ENCODE measurements at regions of chr6 and their contacts with region 1.

Region 1: DNA sequence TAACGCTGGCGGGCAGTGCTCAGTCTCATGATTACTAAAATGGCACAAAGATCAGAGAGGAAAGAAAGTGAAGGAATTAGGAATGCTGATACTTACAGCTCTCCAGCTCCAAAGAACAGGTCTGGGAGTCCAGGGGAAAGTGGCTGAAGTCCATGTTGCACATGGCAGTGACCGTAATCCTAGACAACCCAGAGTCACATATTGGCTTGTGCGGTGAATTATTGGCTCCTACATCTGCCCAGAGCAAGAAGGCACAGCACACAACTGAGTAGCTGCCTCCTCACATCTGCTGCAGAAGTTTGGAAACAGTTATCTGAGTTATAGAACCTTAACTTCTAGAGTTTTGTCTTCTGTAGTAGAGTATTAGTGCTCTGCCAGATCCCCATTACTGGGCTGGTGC is 47.2 kb downstream of the GABRR2 start:
- DNase-seq: no peak
- ATAC-seq: no peak
- H3K4me3 ChIP-seq: no peak overlapping the region
- H3K27ac ChIP-seq: no peak overlapping the region
- H3K4me1 ChIP-seq: no peaks in the 10 kb centered on the region
- H3K27me3 ChIP-seq: peaks cover 5% of the 10 kb centered on the region
- CTCF ChIP-seq: no peak
- POLR2A ChIP-seq: no peak
- RAD21 ChIP-seq: no peak

Region 2: GRCh38 chr6:87378947-87379346 is 1889.0 kb before region 1 on chr6:
- CTCF ChIA-PET with region 1: no interaction called
- POLR2A ChIA-PET with region 1: interaction called, 10 read pairs
- dilution Hi-C with region 1: no loop called
- in situ Hi-C with region 1: no loop called
- intact Hi-C with region 1: no loop called
- DNase-seq: no peak
- ATAC-seq: no peak
- H3K4me3 ChIP-seq: no peak overlapping the region
- H3K27ac ChIP-seq: no peak overlapping the region
- H3K4me1 ChIP-seq: no peaks in the 10 kb centered on the region
- H3K27me3 ChIP-seq: no peaks in the 10 kb centered on the region
- CTCF ChIP-seq: no peak
- POLR2A ChIP-seq: no peak
- RAD21 ChIP-seq: no peak

Region 3: DNA sequence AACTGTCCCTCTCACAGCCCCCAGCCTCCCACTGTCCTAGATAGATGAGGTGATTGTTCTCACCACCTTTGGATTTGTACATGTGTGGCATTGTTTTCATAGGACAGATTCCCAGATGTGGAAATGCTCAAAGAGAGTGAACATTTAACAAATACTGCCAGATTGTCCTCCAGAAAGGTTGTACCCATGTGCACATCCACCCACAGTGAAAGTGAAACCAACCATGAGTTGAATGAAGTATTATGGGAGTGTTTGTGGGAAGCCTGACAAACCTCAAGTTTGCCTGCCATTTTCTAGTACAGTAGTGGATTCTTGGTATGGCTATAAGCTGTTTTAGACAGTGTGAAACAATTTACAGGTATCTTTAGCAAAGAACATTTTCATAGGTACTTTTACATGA is 207.7 kb after region 1 on chr6:
- CTCF ChIA-PET with region 1: no interaction called
- POLR2A ChIA-PET with region 1: no interaction called
- dilution Hi-C with region 1: no loop called
- in situ Hi-C with region 1: no loop called
- intact Hi-C with region 1: no loop called
- DNase-seq: no peak
- ATAC-seq: no peak
- H3K4me3 ChIP-seq: no peak overlapping the region
- H3K27ac ChIP-seq: no peak overlapping the region
- H3K4me1 ChIP-seq: no peaks in the 10 kb centered on the region
- H3K27me3 ChIP-seq: no peaks in the 10 kb centered on the region
- CTCF ChIP-seq: no peak
- POLR2A ChIP-seq: no peak
- RAD21 ChIP-seq: no peak